CD14-positive monocyte (primary cell): ENCODE measurements at regions of chr1 and their contacts with region 1.

Region 1: DNA sequence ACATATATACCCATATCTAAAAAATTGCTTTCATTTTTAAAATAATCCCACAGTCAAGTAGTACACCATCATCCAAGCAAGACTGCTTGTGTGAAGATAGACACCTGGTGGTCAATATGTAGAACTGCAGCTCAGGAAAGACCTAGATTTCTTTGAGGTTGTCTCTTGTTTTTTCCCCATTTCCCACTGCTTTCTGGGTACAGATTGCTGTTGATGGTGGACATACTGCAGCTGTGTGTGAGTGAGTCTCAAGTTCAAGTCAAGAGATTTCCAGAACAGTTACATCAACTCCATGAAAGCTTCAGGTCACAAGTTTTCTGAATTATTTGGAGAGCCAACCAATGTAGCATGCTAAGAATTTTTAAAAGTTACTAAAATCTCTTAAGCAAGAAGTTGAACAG is 306.4 kb downstream of the DUSP10 start:
- DNase-seq: peak; percentile 22 to 60 (median 51)
- H3K4me3 ChIP-seq: no peak overlapping the region
- H3K4me3 Mint-ChIP-seq: no peak overlapping the region
- H3K27ac ChIP-seq: no peak overlapping the region
- H3K27ac Mint-ChIP-seq: no peak overlapping the region
- H3K4me1 ChIP-seq: peaks cover 5 to 7% of the 10 kb centered on the region in 2 donors
- H3K4me1 Mint-ChIP-seq: peaks cover 15% of the 10 kb centered on the region
- H3K27me3 ChIP-seq: no peaks in the 10 kb centered on the region
- H3K27me3 Mint-ChIP-seq: peaks cover 0 to 2% (median 1%) of the 10 kb centered on the region in 3 donors
- CTCF ChIP-seq: peak; percentile 98

Region 2: GRCh38 chr1:220810179-220810653 is 625.3 kb before region 1 on chr1:
- intact Hi-C with region 1: loop called (anchors 5 to 10 kb)
- DNase-seq: peak; percentile 58 to 72 (median 67)
- H3K4me3 ChIP-seq: no peak overlapping the region
- H3K4me3 Mint-ChIP-seq: peak overlapping the region; percentile 21 to 41
- H3K27ac ChIP-seq: no peak overlapping the region
- H3K27ac Mint-ChIP-seq: peak overlapping the region in 1 of 7 donors; percentile 27
- H3K4me1 ChIP-seq: no peaks in the 10 kb centered on the region
- H3K4me1 Mint-ChIP-seq: peaks cover 5% of the 10 kb centered on the region
- H3K27me3 ChIP-seq: no peaks in the 10 kb centered on the region
- H3K27me3 Mint-ChIP-seq: peaks cover 0 to 2% (median 0%) of the 10 kb centered on the region in 3 donors
- CTCF ChIP-seq: peak; percentile 99

Region 3: DNA sequence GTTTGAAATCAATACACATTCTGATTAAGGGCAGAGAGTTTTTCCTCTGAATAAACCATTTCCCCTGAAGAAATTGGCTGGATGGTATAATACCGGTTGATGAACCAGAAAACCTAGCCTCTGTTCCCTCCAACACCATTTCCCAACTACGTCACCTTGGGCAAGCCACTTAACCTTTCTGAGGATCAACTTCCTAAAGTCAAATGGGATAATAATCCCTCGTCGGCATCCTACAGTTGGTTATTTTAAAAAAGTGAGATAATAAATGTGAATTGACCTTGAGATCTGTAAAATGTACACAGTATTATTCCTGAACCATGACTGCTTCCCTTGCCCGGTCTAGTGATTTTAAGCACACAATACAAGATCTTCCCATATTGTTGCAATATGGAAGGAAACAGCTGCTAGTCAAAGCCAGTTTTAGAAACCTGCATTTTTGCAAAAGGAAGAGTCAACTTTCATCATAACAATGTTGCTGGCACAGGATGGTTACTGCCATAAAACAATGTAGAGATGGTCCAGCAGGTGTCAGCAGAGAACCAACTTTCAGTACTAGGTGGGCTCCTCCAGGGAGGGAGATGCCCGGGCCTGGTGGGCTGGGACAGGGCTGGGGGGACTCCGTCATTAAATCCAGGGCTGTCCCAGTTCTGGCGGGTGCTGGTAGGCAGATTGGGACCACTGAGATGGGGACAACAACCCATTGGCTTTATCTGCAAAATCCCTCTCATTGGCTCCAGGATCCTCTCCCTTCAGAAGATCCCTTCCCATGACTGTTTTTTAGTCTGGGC is 561.4 kb before region 1 on chr1:
- intact Hi-C with region 1: loop called (anchors 5 to 10 kb)
- DNase-seq: peak in 2 of 3 donors; percentile 40 to 46
- H3K4me3 ChIP-seq: no peak overlapping the region
- H3K4me3 Mint-ChIP-seq: no peak overlapping the region
- H3K27ac ChIP-seq: no peak overlapping the region
- H3K27ac Mint-ChIP-seq: no peak overlapping the region
- H3K4me1 ChIP-seq: peaks cover 33 to 38% of the 10 kb centered on the region in 2 donors
- H3K4me1 Mint-ChIP-seq: peaks cover 37% of the 10 kb centered on the region
- H3K27me3 ChIP-seq: no peaks in the 10 kb centered on the region
- H3K27me3 Mint-ChIP-seq: peaks cover 0 to 6% (median 0%) of the 10 kb centered on the region in 3 donors
- CTCF ChIP-seq: peak; percentile 91